Activated CD4-positive, alpha-beta memory T cell treated with anti-CD3 and anti-CD28 coated beads, Interleukin-2, amount 10 ng/mL, durations not matched to agents 7 days and 5 days (primary cell): ENCODE measurements at regions of chr2 and their contacts with region 1.

Region 1: DNA sequence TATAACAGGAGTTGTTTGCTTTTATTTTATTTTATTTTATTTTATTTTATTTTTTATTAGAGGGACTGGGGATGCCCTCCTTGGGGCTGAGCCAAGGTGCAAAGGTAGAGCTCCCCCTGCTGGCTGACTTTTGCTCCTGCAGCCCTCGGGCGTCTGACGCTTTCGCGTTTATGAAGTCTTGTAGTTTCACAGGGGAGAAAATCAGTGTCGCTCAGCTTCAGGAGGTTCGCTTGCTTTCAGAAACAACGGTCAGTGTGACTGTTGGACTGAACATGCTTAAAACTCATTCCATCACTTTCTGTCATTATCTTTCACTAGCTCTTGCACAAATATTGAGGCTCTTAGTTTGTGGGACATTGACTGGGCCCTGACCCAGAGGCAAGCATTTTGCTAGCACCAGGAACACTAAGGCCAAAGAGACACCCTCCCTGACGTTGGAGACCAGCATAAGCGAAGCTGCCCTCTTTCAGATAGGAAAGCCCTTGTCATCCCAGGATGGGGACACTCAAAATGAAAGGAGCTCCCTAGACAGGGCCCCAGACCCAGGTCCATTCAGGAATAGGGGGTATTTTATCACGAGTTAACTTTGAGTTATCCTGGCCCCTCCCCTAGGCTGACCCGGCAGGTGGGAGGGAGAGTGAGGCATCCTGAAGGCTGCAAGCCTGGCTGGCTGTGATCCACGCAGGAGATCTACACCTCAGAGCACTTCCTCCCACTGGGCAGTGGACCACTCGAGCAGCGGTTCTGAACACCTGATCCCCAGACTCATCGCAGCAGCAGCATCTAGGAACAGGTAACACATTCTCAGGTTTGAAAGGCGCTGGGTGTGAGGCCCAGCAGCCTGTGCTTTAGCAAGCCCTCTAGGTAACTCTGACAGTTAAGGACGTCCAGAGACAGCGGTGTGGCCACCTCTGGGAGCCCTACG is 34.4 kb downstream of the LGALSL start:
- DNase-seq: peak; percentile 80
- H3K4me3 Mint-ChIP-seq: no peak overlapping the region
- H3K27ac Mint-ChIP-seq: no peak overlapping the region
- H3K4me1 Mint-ChIP-seq: peaks cover 26% of the 10 kb centered on the region
- H3K27me3 Mint-ChIP-seq: peaks cover 11% of the 10 kb centered on the region

Region 2: DNA sequence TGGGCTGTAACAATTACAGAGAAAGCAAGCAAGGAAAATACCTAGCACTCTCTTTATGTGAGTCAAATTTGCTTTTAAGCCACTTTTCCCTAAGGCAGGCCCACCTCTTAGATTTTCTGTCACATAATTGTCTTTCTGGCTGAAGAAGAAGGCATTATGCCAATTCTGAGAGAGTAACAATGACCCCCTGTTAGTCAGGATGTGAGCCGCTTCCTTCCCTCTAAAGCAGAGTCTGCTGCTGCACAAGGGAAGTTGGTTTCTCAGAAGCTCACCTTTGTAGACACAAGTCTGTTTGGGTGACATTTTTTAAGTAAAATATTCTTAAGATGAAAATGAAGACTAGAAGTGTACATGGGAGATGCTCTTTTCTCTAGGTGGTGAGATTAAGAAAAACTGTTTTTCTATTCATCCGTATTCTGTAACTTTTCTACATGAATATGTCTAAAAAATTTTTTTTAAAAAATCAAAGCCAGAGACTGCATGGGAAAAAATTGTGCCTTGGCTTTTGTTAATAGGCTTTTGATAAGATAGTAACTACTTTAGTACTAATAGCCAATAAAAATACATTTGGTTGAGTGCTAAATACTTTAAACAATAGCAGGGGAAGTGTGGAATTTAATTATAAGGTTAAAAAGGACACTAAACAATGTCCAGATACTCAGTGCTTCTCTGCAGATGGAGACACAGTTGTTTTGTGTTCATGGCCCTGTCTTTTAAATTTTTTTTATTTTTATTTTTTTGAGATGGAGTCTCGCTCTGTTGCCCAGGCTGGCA is 435.7 kb before region 1 on chr2:
- CTCF ChIA-PET with region 1: interaction called, 21 read pairs
- POLR2A ChIA-PET with region 1: interaction called, 3 read pairs
- DNase-seq: peak; percentile 20
- H3K4me3 Mint-ChIP-seq: no peak overlapping the region
- H3K27ac Mint-ChIP-seq: no peak overlapping the region
- H3K4me1 Mint-ChIP-seq: peaks cover 47% of the 10 kb centered on the region
- H3K27me3 Mint-ChIP-seq: no peaks in the 10 kb centered on the region

Region 3: GRCh38 chr2:64455545-64455944 is 32.8 kb before region 1 on chr2:
- CTCF ChIA-PET with region 1: interaction called, 14 read pairs
- POLR2A ChIA-PET with region 1: no interaction called
- DNase-seq: no peak
- H3K4me3 Mint-ChIP-seq: peak overlapping the region; percentile 69
- H3K27ac Mint-ChIP-seq: no peak overlapping the region
- H3K4me1 Mint-ChIP-seq: peaks cover 10% of the 10 kb centered on the region
- H3K27me3 Mint-ChIP-seq: peaks cover 30% of the 10 kb centered on the region

Region 4: GRCh38 chr2:64501946-64502345 is 13.6 kb after region 1 on chr2:
- CTCF ChIA-PET with region 1: interaction called, 17 read pairs
- POLR2A ChIA-PET with region 1: interaction called, 4 read pairs
- DNase-seq: no peak
- H3K4me3 Mint-ChIP-seq: no peak overlapping the region
- H3K27ac Mint-ChIP-seq: no peak overlapping the region
- H3K4me1 Mint-ChIP-seq: peaks cover 32% of the 10 kb centered on the region
- H3K27me3 Mint-ChIP-seq: peaks cover 10% of the 10 kb centered on the region

Region 5: DNA sequence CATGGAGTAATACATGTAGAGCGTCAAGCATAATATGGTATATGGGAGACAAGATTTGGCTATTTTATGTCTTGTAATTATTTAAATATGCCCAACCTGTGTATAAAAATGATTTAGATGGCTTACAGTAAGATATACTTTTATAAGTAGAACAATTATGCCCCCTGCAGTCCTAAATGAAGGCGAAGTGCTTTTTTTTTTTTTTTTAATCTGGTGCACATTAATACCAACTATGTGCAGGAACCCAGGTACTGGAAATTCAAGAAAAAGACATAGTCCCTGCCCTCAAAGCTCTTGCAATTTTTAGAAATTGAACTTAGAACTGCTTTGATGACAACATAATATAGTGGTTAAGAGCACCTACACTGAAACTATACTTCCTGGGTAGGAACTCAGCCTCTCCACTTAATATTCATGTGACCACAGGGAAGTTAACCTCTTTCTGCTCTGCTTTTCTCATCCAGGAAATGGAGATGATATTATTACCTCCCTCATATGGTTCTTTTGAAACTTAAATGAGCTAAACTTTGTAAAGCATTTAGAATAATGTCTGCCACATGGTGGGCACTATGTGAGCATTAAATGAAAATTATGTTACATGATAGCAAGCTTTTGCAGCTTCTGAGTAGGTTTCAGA is 74.0 kb after region 1 on chr2:
- CTCF ChIA-PET with region 1: interaction called, 10 read pairs
- POLR2A ChIA-PET with region 1: no interaction called
- DNase-seq: no peak
- H3K4me3 Mint-ChIP-seq: no peak overlapping the region
- H3K27ac Mint-ChIP-seq: peak overlapping the region; percentile 13
- H3K4me1 Mint-ChIP-seq: peaks cover 37% of the 10 kb centered on the region
- H3K27me3 Mint-ChIP-seq: no peaks in the 10 kb centered on the region